ENCODE measurements at regions of chr2 and their contacts with region 1.

Region 1: GRCh38 chr2:12716282-12717190 is at the start of gene TRIB2:
- DNase-seq: peak; percentile 94
- H3K4me3 ChIP-seq: peak within 1 kb of the TSS; percentile 96
- H3K27ac ChIP-seq: peak within 1 kb of the TSS; percentile 99
- H3K4me1 ChIP-seq: peaks cover 77% of the 10 kb centered on the region
- H3K27me3 ChIP-seq: no peaks in the 10 kb centered on the region
- CTCF ChIP-seq: peak; percentile 12
- total RNA-seq, gene TRIB2: 31.1 TPM

Region 2: DNA sequence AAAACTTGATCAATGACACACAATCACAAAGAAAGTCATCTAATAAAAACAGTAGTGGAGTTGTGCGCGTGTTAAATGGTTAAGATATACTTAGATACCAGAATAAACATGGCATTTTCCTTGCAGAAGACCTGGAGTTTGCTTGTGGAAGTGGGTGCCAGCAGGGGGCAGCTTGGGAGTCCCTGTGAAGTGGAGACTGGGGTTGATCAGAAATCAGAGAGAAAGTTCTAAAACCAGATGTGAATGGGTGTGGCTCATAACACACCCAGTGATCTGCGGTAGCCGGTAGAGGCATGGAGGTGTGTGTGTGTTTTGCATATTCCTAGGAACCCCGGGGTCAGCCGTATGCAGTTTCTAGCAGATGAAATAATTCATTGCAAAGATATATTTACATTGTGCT is 299.9 kb before region 1 on chr2:
- intact Hi-C with region 1: loop called (anchors 10 kb)
- DNase-seq: peak; percentile 50
- H3K4me3 ChIP-seq: no peak overlapping the region
- H3K27ac ChIP-seq: no peak overlapping the region
- H3K4me1 ChIP-seq: peaks cover 17% of the 10 kb centered on the region
- H3K27me3 ChIP-seq: no peaks in the 10 kb centered on the region
- CTCF ChIP-seq: peak; percentile 70

Region 3: GRCh38 chr2:12931186-12931844 is 214.8 kb after region 1 on chr2:
- intact Hi-C with region 1: loop called (anchors 5 kb)
- DNase-seq: no peak
- H3K4me3 ChIP-seq: no peak overlapping the region
- H3K27ac ChIP-seq: peak overlapping the region; percentile 46
- H3K4me1 ChIP-seq: peaks cover 49% of the 10 kb centered on the region
- H3K27me3 ChIP-seq: no peaks in the 10 kb centered on the region
- CTCF ChIP-seq: peak; percentile 95